ENCODE measurements at regions of chr4 and their contacts with region 1.

Region 1: DNA sequence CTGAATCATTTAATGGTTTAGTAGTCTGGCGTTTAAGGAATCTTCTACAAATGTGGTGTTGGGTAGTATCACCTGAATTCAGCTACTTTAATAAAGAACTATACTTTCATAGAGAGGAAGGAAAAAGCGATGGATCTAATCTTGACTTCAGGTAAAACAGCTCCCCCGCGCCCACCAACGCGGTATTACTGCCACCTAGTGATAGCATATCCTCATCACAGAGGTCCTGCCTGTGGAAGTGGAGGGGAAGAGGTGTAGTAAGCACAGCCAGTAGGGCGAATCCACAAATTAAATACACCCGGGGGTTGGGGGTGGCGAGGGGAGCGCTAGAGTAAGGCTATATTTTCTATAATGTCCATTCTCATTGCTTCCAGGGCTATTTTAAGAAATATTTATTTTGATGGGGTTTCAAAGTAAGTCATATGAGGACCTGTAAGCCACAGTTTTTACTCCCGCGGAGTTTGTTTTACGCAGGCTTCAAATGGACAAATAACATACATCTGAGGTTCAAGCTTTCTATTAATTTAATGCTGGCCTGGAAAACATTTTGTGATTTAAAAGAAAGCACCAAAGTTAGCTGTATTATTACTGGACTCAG is 8.3 kb upstream of the DAPP1 start:
- DNase-seq: peak; percentile 46 to 80 (median 69)
- ATAC-seq: peak; percentile 97
- H3K4me3 ChIP-seq: no peak overlapping the region
- H3K4me3 Mint-ChIP-seq: no peak overlapping the region
- H3K27ac ChIP-seq: no peak overlapping the region
- H3K27ac Mint-ChIP-seq: no peak overlapping the region
- H3K4me1 ChIP-seq: no peaks in the 10 kb centered on the region
- H3K4me1 Mint-ChIP-seq: peaks cover 4% of the 10 kb centered on the region
- H3K27me3 ChIP-seq: no peaks in the 10 kb centered on the region
- H3K27me3 Mint-ChIP-seq: peaks cover 14% of the 10 kb centered on the region
- CTCF ChIP-seq: peak; percentile 93

Region 2: GRCh38 chr4:99827454-99827853 is 19.1 kb after region 1 on chr4:
- CTCF ChIA-PET with region 1: interaction called, 11 read pairs
- POLR2A ChIA-PET with region 1: interaction called, 3 read pairs
- intact Hi-C with region 1: no loop called
- DNase-seq: no peak
- ATAC-seq: no peak
- H3K4me3 ChIP-seq: no peak overlapping the region
- H3K4me3 Mint-ChIP-seq: no peak overlapping the region
- H3K27ac ChIP-seq: no peak overlapping the region
- H3K27ac Mint-ChIP-seq: no peak overlapping the region
- H3K4me1 ChIP-seq: no peaks in the 10 kb centered on the region
- H3K4me1 Mint-ChIP-seq: peaks cover 8% of the 10 kb centered on the region
- H3K27me3 ChIP-seq: no peaks in the 10 kb centered on the region
- H3K27me3 Mint-ChIP-seq: no peaks in the 10 kb centered on the region
- CTCF ChIP-seq: no peak

Region 3: DNA sequence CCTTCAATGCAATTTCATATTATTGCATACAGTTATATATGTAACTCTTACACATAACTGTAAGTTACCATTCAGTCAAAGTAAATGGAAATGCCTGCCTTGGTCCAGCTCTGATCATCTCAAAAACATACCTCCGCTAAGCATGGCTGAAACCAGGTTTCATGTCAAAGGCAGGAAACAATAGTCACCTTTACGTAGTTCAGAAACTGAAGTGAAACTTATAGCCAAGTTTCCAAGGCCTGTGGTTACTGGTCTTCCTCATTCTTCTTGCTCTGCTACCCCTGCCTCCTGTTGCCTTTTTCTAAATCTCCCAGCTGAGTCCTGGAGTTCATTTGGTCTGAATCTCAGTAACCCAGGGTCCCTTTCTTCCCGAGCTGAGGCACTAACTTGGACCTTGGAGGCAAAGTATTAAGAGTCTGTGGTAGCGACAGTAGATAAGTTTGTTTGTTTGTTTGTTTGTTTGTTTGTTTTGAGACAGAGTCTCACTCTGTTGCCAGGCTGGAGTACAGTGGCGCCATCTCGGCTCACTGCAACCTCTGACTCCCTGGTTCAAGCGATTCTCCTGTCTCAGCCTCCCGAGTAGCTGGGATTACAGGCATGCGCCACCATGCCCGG is 39.1 kb after region 1 on chr4:
- CTCF ChIA-PET with region 1: interaction called, 5 read pairs
- POLR2A ChIA-PET with region 1: no interaction called
- intact Hi-C with region 1: loop called in 1 of 2 experiments (anchors 5 kb)
- DNase-seq: peak in 1 of 9 experiments; percentile 25
- ATAC-seq: peak; percentile 43
- H3K4me3 ChIP-seq: no peak overlapping the region
- H3K4me3 Mint-ChIP-seq: no peak overlapping the region
- H3K27ac ChIP-seq: no peak overlapping the region
- H3K27ac Mint-ChIP-seq: peak overlapping the region; percentile 63
- H3K4me1 ChIP-seq: peaks cover 25% of the 10 kb centered on the region
- H3K4me1 Mint-ChIP-seq: peaks cover 33% of the 10 kb centered on the region
- H3K27me3 ChIP-seq: no peaks in the 10 kb centered on the region
- H3K27me3 Mint-ChIP-seq: no peaks in the 10 kb centered on the region
- CTCF ChIP-seq: no peak

Region 4: GRCh38 chr4:99885063-99885664 is 76.8 kb after region 1 on chr4:
- CTCF ChIA-PET with region 1: interaction called, 6 read pairs
- POLR2A ChIA-PET with region 1: no interaction called
- intact Hi-C with region 1: loop called (anchors 2 kb)
- DNase-seq: peak in 4 of 9 experiments; percentile 20 to 72 (median 41)
- ATAC-seq: no peak
- H3K4me3 ChIP-seq: no peak overlapping the region
- H3K4me3 Mint-ChIP-seq: no peak overlapping the region
- H3K27ac ChIP-seq: no peak overlapping the region
- H3K27ac Mint-ChIP-seq: no peak overlapping the region
- H3K4me1 ChIP-seq: peaks cover 2% of the 10 kb centered on the region
- H3K4me1 Mint-ChIP-seq: peaks cover 16% of the 10 kb centered on the region
- H3K27me3 ChIP-seq: no peaks in the 10 kb centered on the region
- H3K27me3 Mint-ChIP-seq: no peaks in the 10 kb centered on the region
- CTCF ChIP-seq: peak; percentile 67

Region 5: DNA sequence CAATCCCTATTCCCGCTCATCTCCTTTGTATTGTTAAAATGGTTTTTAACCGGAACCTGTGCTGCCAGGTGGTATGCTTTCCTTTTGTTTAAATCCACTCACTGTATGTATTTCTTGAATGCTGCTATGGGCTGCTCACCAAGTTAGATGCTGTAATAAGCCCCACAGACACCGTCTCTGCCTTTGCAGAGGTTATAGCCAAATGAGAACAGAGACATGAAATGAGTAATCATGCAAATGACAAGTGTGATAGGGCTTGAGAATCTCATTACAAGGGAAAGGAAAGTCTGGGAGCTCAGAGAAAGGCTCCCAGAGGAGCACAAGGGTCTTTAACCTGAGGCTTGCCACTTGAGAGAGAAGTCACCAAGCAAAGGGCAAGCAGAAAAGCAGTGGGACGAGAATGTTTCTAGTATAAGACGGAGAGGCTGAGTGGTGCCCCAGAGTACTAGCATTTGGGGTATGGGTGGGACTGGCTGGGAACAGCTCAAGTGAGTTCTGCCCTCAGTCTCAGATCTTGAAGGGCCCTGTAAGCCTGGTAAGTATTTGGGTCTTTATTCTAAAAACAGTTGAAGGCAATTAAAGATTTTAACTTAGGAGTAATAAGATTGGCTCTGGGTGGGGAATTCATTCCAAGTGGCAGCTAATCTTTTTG is 252.5 kb after region 1 on chr4:
- CTCF ChIA-PET with region 1: interaction called, 4 read pairs
- POLR2A ChIA-PET with region 1: no interaction called
- intact Hi-C with region 1: loop called (anchors 1 to 10 kb)
- DNase-seq: no peak
- ATAC-seq: no peak
- H3K4me3 ChIP-seq: no peak overlapping the region
- H3K4me3 Mint-ChIP-seq: no peak overlapping the region
- H3K27ac ChIP-seq: no peak overlapping the region
- H3K27ac Mint-ChIP-seq: no peak overlapping the region
- H3K4me1 ChIP-seq: no peaks in the 10 kb centered on the region
- H3K4me1 Mint-ChIP-seq: no peaks in the 10 kb centered on the region
- H3K27me3 ChIP-seq: peaks cover 0 to 6% of the 10 kb centered on the region in 2 experiments
- H3K27me3 Mint-ChIP-seq: no peaks in the 10 kb centered on the region
- CTCF ChIP-seq: no peak